ENCODE measurements at regions of chr16 and their contacts with region 1.

Region 1: DNA sequence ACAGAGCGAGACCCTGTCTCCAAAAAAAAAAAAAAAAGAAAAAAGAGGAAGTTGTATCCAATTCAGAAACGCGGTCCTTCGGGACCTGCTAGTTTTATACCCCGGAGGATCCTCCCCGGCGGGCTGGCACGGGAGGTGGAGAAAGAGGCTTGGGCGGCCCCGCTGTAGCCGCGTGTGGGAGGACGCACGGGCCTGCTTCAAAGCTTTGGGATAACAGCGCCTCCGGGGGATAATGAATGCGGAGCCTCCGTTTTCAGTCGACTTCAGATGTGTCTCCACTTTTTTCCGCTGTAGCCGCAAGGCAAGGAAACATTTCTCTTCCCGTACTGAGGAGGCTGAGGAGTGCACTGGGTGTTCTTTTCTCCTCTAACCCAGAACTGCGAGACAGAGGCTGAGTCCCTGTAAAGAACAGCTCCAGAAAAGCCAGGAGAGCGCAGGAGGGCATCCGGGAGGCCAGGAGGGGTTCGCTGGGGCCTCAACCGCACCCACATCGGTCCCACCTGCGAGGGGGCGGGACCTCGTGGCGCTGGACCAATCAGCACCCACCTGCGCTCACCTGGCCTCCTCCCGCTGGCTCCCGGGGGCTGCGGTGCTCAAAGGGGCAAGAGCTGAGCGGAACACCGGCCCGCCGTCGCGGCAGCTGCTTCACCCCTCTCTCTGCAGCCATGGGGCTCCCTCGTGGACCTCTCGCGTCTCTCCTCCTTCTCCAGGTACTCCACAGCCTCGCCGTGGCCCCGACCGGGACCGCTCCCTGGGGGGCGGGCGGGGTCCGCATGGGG is at the start of gene CDH3:
- DNase-seq: peak; percentile 82 to 93
- H3K4me3 ChIP-seq: peak within 1 kb of the TSS; percentile 90 to 97 (median 90)
- H3K27ac ChIP-seq: peak within 1 kb of the TSS; percentile 46
- H3K4me1 ChIP-seq: peaks cover 9 to 19% (median 14%) of the 10 kb centered on the region in 4 experiments
- H3K27me3 ChIP-seq: peaks cover 0 to 11% (median 10%) of the 10 kb centered on the region in 4 experiments; a peak in 4 of 7 replicates
- CTCF ChIP-seq: no peak
- EP300 ChIP-seq: no peak; a peak in 1 of 3 replicates
- POLR2A ChIP-seq: peak in 1 of 2 experiments; percentile 79; a peak in 1 of 3 replicates
- RAD21 ChIP-seq: no peak
- total RNA-seq, gene CDH3: 142 and 146 TPM in 2 replicates

Region 2: DNA sequence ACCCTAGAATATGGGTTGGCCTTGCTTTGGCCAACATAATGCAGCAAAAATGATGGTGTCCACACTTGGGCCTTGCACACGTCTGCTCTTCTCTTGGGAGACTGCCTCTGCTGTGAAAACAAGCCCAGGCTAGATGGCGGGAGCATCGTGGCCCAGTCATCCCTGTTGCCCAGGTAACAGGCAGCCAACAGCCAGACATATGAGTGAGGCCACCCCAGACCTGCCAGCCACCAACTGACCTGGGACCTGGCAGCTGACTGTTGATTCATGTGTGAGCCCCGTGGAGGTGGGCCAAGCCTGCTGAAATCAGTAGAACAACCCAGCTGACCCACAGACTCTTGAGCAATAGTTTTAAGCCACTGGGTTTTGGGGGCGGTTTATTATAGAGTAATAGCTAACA is 39.2 kb before region 1 on chr16:
- CTCF ChIA-PET with region 1: no interaction called
- POLR2A ChIA-PET with region 1: interaction called, 11 read pairs
- DNase-seq: no peak
- H3K4me3 ChIP-seq: no peak overlapping the region
- H3K27ac ChIP-seq: no peak overlapping the region
- H3K4me1 ChIP-seq: peaks cover 0 to 3% (median 0%) of the 10 kb centered on the region in 4 experiments; a peak in 2 of 7 replicates
- H3K27me3 ChIP-seq: no peaks in the 10 kb centered on the region
- CTCF ChIP-seq: no peak
- EP300 ChIP-seq: no peak
- POLR2A ChIP-seq: no peak
- RAD21 ChIP-seq: no peak

Region 3: GRCh38 chr16:68612996-68613395 is 31.9 kb before region 1 on chr16:
- CTCF ChIA-PET with region 1: interaction called, 3 read pairs
- POLR2A ChIA-PET with region 1: interaction called, 10 read pairs
- DNase-seq: no peak
- H3K4me3 ChIP-seq: no peak overlapping the region
- H3K27ac ChIP-seq: no peak overlapping the region
- H3K4me1 ChIP-seq: no peaks in the 10 kb centered on the region
- H3K27me3 ChIP-seq: no peaks in the 10 kb centered on the region
- CTCF ChIP-seq: no peak
- EP300 ChIP-seq: no peak
- POLR2A ChIP-seq: no peak
- RAD21 ChIP-seq: no peak

Region 4: GRCh38 chr16:68658258-68659008 is 13.5 kb after region 1 on chr16:
- CTCF ChIA-PET with region 1: interaction called, 6 read pairs
- POLR2A ChIA-PET with region 1: interaction called, 81 read pairs
- DNase-seq: no peak
- H3K4me3 ChIP-seq: no peak overlapping the region
- H3K27ac ChIP-seq: no peak overlapping the region
- H3K4me1 ChIP-seq: peaks cover 0 to 6% (median 0%) of the 10 kb centered on the region in 4 experiments; a peak in 1 of 7 replicates
- H3K27me3 ChIP-seq: no peaks in the 10 kb centered on the region
- CTCF ChIP-seq: no peak
- EP300 ChIP-seq: no peak
- POLR2A ChIP-seq: no peak
- RAD21 ChIP-seq: no peak

Region 5: GRCh38 chr16:68668266-68668665 is 23.4 kb after region 1 on chr16:
- CTCF ChIA-PET with region 1: interaction called, 6 read pairs
- POLR2A ChIA-PET with region 1: interaction called, 14 read pairs
- DNase-seq: no peak
- H3K4me3 ChIP-seq: no peak overlapping the region
- H3K27ac ChIP-seq: no peak overlapping the region
- H3K4me1 ChIP-seq: no peaks in the 10 kb centered on the region
- H3K27me3 ChIP-seq: no peaks in the 10 kb centered on the region
- CTCF ChIP-seq: no peak
- EP300 ChIP-seq: no peak
- POLR2A ChIP-seq: no peak
- RAD21 ChIP-seq: no peak

Region 6: DNA sequence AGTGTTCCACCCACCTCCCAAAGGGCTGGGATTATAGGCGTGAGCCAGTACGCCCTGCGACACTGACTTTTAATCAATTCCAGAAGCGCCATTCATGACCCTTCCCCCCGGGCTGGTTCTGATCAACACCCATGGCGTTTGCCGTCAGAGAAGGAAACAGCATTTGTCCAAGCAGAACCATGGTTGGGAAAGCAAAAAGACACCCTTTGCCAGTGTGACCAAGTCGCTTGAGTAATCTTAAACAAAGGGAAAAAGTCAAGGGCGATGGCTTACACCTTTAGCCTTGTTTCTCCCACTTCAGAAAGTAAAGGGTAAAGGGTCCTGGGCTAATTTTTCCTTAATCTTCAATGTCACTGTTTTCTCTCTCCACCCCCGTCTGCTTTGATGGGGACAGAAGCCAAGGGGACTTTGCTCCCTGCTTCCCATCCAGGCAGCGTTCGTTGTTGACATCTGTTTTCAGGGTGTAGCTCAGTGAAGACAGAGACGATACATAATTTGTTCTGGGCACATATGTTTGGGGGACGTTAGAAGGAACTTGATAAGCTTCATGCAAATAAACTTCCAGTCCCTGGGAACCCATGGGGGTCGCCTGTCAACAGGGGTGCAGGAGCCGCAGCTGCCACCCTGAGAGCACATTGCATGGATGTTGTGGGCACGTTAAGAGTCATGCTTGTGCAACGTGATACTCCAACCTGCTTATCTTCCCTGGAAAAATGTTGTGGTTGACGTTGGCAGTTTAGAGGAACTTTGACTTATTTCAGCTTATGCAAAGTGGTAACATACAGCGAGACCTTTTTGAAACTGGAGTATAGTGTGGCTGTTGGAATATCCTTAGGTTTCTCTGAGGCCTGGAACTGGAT is 147.8 kb after region 1 on chr16:
- CTCF ChIA-PET with region 1: no interaction called
- POLR2A ChIA-PET with region 1: no interaction called
- DNase-seq: no peak
- H3K4me3 ChIP-seq: no peak overlapping the region
- H3K27ac ChIP-seq: peak overlapping the region; percentile 38; the same call in 1 of the 2 replicates
- H3K4me1 ChIP-seq: peaks cover 8 to 35% (median 24%) of the 10 kb centered on the region in 4 experiments
- H3K27me3 ChIP-seq: no peaks in the 10 kb centered on the region
- CTCF ChIP-seq: no peak
- EP300 ChIP-seq: no peak
- POLR2A ChIP-seq: no peak
- RAD21 ChIP-seq: no peak

Measured in H1 (cell line).